Transverse colon (tissue), 4 donors: ENCODE measurements at regions of chr4 and their contacts with region 1.

Region 1: GRCh38 chr4:75724066-75724866 is at the start of gene USO1:
- DNase-seq: peak; percentile 100
- H3K4me3 ChIP-seq: peak within 1 kb of the TSS; percentile 74 to 98 (median 84)
- H3K27ac ChIP-seq: peak within 1 kb of the TSS; percentile 96 to 100 (median 98)
- H3K4me1 ChIP-seq: peaks cover 11 to 40% (median 34%) of the 10 kb centered on the region in 4 donors
- H3K27me3 ChIP-seq: no peaks in the 10 kb centered on the region
- CTCF ChIP-seq: peak; percentile 72 to 92 (median 78)
- EP300 ChIP-seq: no peak
- POLR2A ChIP-seq: peak; percentile 99
- total RNA-seq, gene USO1: 24.3 to 110 (median 61.0) TPM

Region 2: GRCh38 chr4:75653845-75654503 is 70.3 kb before region 1 on chr4:
- in situ Hi-C with region 1: loop called in 1 of 4 experiments (anchors 10 kb)
- intact Hi-C with region 1: no loop called
- DNase-seq: no peak
- H3K4me3 ChIP-seq: no peak overlapping the region
- H3K27ac ChIP-seq: no peak overlapping the region
- H3K4me1 ChIP-seq: peaks cover 0 to 2% (median 0%) of the 10 kb centered on the region in 4 donors
- H3K27me3 ChIP-seq: no peaks in the 10 kb centered on the region
- CTCF ChIP-seq: peak; percentile 36 to 66 (median 52)
- EP300 ChIP-seq: no peak
- POLR2A ChIP-seq: no peak

Region 3: GRCh38 chr4:75673027-75673958 is 51.0 kb before region 1 on chr4 and contains the start of gene G3BP2:
- in situ Hi-C with region 1: loop called in 1 of 4 experiments (anchors 10 kb)
- intact Hi-C with region 1: loop called (anchors 5 kb)
- DNase-seq: peak; percentile 99
- H3K4me3 ChIP-seq: peak within 1 kb of the TSS; percentile 76 to 98 (median 80)
- H3K27ac ChIP-seq: peak within 1 kb of the TSS; percentile 92 to 100 (median 96)
- H3K4me1 ChIP-seq: peaks cover 17 to 55% (median 28%) of the 10 kb centered on the region in 4 donors
- H3K27me3 ChIP-seq: no peaks in the 10 kb centered on the region
- CTCF ChIP-seq: no peak
- EP300 ChIP-seq: no peak
- POLR2A ChIP-seq: peak; percentile 98
- total RNA-seq, gene G3BP2: 50.7 to 110 (median 88.0) TPM

Region 4: GRCh38 chr4:75779105-75779757 is 55.0 kb after region 1 on chr4:
- in situ Hi-C with region 1: no loop called
- intact Hi-C with region 1: no loop called
- DNase-seq: no peak
- H3K4me3 ChIP-seq: no peak overlapping the region
- H3K27ac ChIP-seq: no peak overlapping the region
- H3K4me1 ChIP-seq: no peaks in the 10 kb centered on the region
- H3K27me3 ChIP-seq: no peaks in the 10 kb centered on the region
- CTCF ChIP-seq: no peak
- EP300 ChIP-seq: no peak
- POLR2A ChIP-seq: no peak